Activated CD8-positive, alpha-beta memory T cell treated with anti-CD3 and anti-CD28 coated beads, Interleukin-2, amount 10 ng/mL, durations not matched to agents 7 days and 5 days (primary cell): ENCODE measurements at regions of chr3 and their contacts with region 1.

Region 1: DNA sequence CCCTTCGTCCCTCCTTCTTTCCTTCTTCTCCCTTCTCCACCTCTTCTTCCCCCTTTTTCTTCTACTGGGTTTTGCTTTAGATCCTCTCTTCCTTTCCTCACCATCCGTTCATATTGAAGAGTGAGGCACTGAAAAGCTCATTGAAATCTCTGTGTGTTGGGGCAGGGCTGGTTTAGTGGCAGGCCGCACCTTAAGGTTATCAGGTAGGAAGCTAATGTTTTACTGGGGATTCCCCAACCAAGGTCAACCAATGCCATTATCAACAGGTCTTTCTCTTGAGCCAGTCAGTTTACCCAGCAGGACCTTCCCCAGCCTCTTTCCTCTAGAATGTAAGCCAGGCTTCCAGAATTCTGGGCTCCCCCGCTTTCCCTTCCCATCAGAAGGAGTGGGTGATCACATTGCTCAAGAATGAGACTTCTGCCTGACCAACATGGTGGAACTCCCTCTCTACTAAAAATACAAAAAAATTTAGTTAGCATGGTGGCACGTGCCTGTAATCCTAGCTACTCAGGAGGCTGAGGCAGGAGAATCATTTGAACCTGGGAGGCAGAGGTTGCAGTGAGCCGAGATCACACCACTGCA is 11.5 kb upstream of the VPS8 start:
- DNase-seq: no peak
- ATAC-seq: no peak
- H3K4me3 Mint-ChIP-seq: no peak overlapping the region
- H3K27ac Mint-ChIP-seq: no peak overlapping the region
- H3K4me1 Mint-ChIP-seq: peaks cover 9% of the 10 kb centered on the region
- H3K27me3 Mint-ChIP-seq: peaks cover 40% of the 10 kb centered on the region

Region 2: DNA sequence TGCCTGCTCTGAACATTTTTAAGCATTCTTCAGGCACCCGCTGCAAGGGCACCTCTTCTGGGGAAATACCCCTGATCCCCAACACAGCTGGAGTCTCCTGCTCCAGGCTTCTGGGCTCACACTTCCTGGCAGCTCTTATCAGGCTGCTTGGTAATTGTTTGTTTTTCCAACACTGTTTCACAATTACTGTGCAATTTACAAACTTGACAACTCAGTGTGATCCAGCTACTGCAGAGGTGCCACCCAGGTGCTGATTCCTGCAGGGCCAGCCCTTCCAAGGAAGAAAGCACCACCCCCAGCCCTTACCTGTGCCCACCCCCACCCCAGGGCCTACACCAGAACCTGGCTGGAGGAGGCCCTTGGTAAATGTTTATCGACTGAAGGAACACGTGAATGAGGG is 155.1 kb before region 1 on chr3:
- CTCF ChIA-PET with region 1: no interaction called
- DNase-seq: no peak
- ATAC-seq: no peak
- H3K4me3 Mint-ChIP-seq: no peak overlapping the region
- H3K27ac Mint-ChIP-seq: no peak overlapping the region
- H3K4me1 Mint-ChIP-seq: peaks cover 2% of the 10 kb centered on the region
- H3K27me3 Mint-ChIP-seq: peaks cover 6% of the 10 kb centered on the region

Region 3: DNA sequence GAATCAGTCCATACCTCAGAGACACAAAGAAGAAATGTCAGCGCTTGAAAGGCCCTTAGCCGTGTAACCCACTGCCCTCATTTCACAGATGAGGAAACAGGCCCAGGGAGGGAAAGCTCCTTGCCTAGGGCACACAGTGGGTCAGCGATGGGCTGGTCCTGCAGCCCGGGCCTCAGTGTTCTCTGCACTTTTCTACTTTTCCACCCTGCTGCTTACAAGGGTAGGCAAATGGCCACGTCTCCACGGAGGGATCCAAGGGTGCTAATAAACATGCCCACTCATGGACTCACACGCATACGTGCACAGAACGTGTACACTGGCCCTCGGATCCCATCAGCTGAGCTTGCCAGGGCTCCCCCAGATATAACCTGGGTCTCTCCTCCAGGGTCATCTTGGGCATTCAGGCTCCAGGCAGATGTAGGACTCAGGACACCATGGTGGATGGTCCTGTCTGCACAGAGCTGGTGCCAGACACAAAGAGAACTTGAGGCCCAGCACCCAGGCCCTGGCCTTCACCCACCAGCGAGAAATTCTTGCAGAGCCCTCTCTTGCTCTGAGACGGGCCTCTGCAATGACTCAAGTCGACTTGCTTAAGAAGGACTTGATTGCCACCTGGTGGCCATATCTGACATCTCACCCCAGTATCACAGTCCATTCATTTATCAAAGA is 23.0 kb before region 1 on chr3:
- CTCF ChIA-PET with region 1: interaction called, 23 read pairs
- DNase-seq: peak; percentile 92
- ATAC-seq: peak; percentile 93
- H3K4me3 Mint-ChIP-seq: no peak overlapping the region
- H3K27ac Mint-ChIP-seq: no peak overlapping the region
- H3K4me1 Mint-ChIP-seq: peaks cover 1% of the 10 kb centered on the region
- H3K27me3 Mint-ChIP-seq: peaks cover 21% of the 10 kb centered on the region